ENCODE measurements at regions of chr9 and their contacts with region 1.

Region 1: GRCh38 chr9:33816327-33817252 is at the start of gene UBE2R2:
- DNase-seq: peak; percentile 94 to 97
- ATAC-seq: peak; percentile 96
- H3K4me3 ChIP-seq: peak within 1 kb of the TSS; percentile 73 to 98
- H3K27ac ChIP-seq: peak within 1 kb of the TSS; percentile 79 to 93
- H3K4me1 ChIP-seq: no peaks in the 10 kb centered on the region
- H3K27me3 ChIP-seq: no peaks in the 10 kb centered on the region
- total RNA-seq, gene UBE2R2: 34.3 to 35.4 TPM

Region 2: DNA sequence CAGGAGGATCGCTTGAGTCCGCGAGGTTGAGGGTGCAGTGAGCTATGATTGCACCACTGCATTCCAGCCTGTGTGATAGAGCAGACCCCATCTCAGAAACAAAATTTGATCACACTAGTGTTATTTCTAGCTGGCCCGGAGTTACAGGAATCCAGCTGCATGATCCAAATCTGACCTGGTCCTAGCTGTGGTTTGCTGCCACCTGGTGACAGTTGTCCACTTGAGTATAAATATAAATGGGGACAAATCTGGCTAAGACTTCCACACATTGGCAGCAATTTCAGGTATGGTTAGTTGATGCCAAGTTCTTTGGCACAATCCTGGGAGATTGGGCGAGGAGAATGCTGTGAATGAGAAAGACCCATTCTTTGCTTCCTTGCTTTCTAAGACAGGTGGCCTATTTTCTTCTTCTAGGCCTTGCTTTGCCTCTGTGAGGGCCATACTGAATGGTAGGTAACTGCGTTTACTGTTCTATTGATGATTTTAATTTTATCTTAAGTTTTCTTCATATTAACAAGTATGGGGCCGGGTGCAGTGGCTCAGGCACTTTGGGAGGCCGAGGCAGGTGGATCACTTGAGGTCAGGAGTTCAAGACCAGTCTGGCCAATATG is 35.7 kb after region 1 on chr9:
- intact Hi-C with region 1: loop called (anchors 1 to 2 kb)
- DNase-seq: peak; percentile 76 to 81
- ATAC-seq: peak; percentile 83
- H3K4me3 ChIP-seq: no peak overlapping the region
- H3K27ac ChIP-seq: no peak overlapping the region
- H3K4me1 ChIP-seq: peaks cover 0 to 2% of the 10 kb centered on the region in 2 donors
- H3K27me3 ChIP-seq: no peaks in the 10 kb centered on the region

Measured in aorta (tissue), 5 donors.